ENCODE measurements at regions of chr2 and their contacts with region 1.

Region 1: DNA sequence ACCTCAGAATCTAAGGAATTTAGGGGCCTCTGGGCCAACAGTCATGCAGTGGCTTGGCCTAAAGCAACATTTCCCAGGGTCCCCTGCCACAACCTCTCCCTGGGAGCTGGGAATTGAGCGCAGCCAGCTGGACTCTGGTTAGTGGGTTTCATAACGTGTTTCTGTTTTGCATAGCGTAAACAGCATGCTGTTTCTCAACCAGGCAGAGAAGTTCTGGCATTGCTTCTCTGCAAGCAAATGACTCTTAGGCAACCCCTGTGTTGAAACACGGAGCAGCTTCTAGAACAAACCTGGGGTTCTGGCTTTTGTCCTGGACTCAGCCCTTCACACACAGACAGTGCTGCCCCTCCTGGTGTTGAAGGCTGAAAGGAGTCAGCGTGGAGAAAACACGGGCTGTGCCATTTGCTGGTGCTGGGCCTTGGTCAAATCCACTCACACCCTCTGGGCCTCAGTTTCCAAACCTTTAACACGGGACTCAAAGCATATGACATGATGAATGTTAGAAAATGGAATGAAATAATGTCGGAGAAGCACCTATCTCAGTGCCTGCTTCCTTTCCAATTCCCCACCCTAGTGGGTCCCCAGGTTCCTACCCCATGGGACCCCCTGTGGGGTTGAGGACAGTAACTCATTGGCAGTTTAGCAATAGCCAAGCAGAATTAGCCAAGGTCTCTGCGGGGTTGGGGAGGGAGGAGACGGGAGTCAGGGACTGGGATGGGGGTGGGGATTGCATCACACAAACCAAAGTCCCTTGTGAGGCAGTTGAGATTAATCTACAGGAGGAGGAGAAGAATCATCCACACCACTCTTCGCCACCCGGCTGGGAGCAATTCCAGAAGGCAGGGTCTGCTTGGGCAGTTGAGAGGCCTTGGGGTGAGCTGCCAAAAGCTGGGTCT is 30.2 kb upstream of the IL1R2 start:
- H3K4me3 Mint-ChIP-seq: peak overlapping the region; percentile 73
- H3K27ac Mint-ChIP-seq: peak overlapping the region; percentile 79
- H3K4me1 Mint-ChIP-seq: peaks cover 92% of the 10 kb centered on the region
- H3K27me3 Mint-ChIP-seq: no peaks in the 10 kb centered on the region

Region 2: DNA sequence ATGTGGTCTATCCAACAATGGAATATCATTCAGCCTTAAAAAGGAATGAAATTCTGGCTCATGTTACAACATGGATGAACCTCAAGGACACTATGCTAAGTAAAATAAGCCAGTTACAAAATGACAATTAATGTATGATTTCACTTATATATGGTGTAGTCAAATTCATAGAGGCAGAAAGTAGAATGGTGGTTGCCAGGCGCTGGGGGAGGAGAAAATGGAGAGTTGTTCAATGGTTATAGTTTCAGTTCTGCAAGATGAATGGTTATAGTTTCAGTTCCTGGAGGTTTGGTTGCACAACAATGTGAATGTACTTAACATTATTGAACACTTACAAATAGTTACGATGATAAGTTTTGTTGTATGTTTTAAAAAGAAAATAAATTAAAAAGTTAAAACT is 49.0 kb before region 1 on chr2:
- intact Hi-C with region 1: loop called (anchors 5 kb)
- H3K4me3 Mint-ChIP-seq: peak overlapping the region; percentile 33
- H3K27ac Mint-ChIP-seq: peak overlapping the region; percentile 90
- H3K4me1 Mint-ChIP-seq: peaks cover 49% of the 10 kb centered on the region
- H3K27me3 Mint-ChIP-seq: no peaks in the 10 kb centered on the region

Region 3: DNA sequence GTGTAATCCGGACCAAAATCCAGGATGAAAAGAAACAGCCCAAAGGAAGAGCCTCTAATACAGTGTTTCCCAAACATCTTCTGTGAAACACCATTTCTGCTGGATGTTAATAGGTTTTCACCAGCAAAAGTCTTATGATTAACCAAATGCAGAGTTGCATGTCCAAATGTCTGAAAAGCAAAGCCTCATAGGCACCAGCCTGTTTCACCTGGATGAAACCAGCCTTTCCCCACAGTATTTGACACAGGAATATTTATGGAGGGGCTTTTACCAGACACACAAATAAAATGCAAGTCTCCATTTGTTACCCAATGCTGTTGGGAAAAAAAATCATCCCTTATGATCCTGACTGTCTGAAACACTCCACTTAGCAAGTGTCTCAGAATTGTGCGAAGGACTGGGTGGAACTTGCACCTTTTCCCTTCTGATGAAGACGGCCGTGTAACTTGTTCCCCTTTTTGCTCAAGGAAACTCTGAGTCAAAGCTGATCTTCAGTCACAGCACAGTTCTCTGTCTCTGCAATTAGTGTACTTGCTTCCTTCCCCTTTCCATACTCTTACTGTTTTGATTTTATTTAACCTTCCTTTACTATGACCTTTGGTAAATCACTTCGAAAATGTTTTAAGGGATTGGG is 40.1 kb before region 1 on chr2:
- intact Hi-C with region 1: loop called (anchors 5 kb)
- H3K4me3 Mint-ChIP-seq: no peak overlapping the region
- H3K27ac Mint-ChIP-seq: peak overlapping the region; percentile 87
- H3K4me1 Mint-ChIP-seq: peaks cover 32% of the 10 kb centered on the region
- H3K27me3 Mint-ChIP-seq: no peaks in the 10 kb centered on the region

Region 4: GRCh38 chr2:101949304-101949703 is 12.2 kb before region 1 on chr2:
- intact Hi-C with region 1: loop called (anchors 1 kb)
- H3K4me3 Mint-ChIP-seq: no peak overlapping the region
- H3K27ac Mint-ChIP-seq: peak overlapping the region; percentile 76
- H3K4me1 Mint-ChIP-seq: peaks cover 61% of the 10 kb centered on the region
- H3K27me3 Mint-ChIP-seq: no peaks in the 10 kb centered on the region

Measured in dendritic cell treated with granulocyte-macrophage colony-stimulating factor and Interleukin-4, amounts not matched to agents 40 ng/mL and 50 ng/mL, for 4 days (primary cell).